ENCODE measurements at regions of chr15 and their contacts with region 1.

Region 1: GRCh38 chr15:76311100-76311953 is at the start of gene ETFA:
- DNase-seq: peak; percentile 97
- H3K4me3 Mint-ChIP-seq: peak within 1 kb of the TSS; percentile 90
- H3K27ac Mint-ChIP-seq: peak within 1 kb of the TSS; percentile 62
- H3K4me1 Mint-ChIP-seq: peaks cover 31% of the 10 kb centered on the region
- H3K27me3 Mint-ChIP-seq: no peaks in the 10 kb centered on the region
- total RNA-seq, gene ETFA: 169 to 173 TPM

Region 2: GRCh38 chr15:75201609-75202250 is 1109.6 kb before region 1 on chr15 and contains the start of gene C15orf39:
- CTCF ChIA-PET with region 1: no interaction called
- POLR2A ChIA-PET with region 1: no interaction called
- intact Hi-C with region 1: no loop called
- DNase-seq: peak; percentile 80
- H3K4me3 Mint-ChIP-seq: peak within 1 kb of the TSS; percentile 89
- H3K27ac Mint-ChIP-seq: peak within 1 kb of the TSS; percentile 84
- H3K4me1 Mint-ChIP-seq: peaks cover 35% of the 10 kb centered on the region
- H3K27me3 Mint-ChIP-seq: no peaks in the 10 kb centered on the region
- total RNA-seq, gene C15orf39: 14.1 to 14.2 TPM

Region 3: DNA sequence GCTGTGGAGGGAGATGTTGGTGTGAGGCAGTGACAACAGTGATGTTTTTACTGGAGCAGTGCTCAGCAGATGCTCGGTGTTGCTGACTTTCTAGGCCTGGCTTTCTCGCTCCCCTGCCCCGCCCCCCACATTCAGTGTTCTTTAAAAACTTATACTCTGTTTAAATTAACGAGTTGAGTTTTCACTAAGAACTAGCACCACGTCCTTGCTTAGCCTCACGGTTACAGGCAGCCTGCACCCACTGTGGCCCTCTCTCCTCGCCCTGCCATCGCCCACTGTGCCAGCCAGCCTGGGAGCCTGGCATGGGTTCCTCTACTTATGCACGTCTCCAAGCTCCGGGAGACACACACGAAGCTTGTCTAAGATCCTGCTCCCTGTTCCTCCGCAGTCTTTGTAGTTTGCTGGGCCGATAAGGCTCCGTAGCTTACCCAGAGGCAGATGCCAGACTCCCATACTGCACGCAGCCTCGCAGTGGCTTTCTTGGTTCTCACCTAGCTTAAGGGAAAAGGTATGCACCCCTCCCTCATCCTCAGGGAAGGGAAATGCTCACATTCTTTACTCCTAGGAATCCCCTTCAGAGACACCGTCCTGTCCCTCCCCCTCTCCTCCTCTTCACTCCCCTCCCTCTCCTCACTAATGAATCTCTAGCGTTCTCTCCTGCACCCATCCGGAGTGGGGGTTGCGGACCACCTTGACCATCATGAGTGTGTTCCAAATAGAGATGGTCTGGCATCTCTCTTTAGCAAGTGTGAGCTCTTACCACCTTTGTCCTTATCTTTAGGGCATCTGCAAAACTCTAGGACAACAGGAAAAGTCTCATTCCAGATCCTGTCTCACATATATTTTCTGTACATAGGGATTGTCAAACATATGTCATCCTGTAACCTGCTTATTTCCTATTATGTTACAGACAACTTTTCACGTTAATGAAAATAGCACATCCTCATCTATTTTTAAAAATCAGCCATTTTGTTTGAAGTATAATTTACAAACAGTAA is 195.1 kb before region 1 on chr15:
- CTCF ChIA-PET with region 1: no interaction called
- POLR2A ChIA-PET with region 1: no interaction called
- intact Hi-C with region 1: no loop called
- DNase-seq: no peak
- H3K4me3 Mint-ChIP-seq: no peak overlapping the region
- H3K27ac Mint-ChIP-seq: no peak overlapping the region
- H3K4me1 Mint-ChIP-seq: no peaks in the 10 kb centered on the region
- H3K27me3 Mint-ChIP-seq: no peaks in the 10 kb centered on the region

Region 4: GRCh38 chr15:76190834-76191538 is 120.3 kb before region 1 on chr15:
- CTCF ChIA-PET with region 1: no interaction called
- POLR2A ChIA-PET with region 1: no interaction called
- intact Hi-C with region 1: loop called (anchors 5 kb)
- DNase-seq: peak; percentile 84
- H3K4me3 Mint-ChIP-seq: no peak overlapping the region
- H3K27ac Mint-ChIP-seq: no peak overlapping the region
- H3K4me1 Mint-ChIP-seq: peaks cover 13% of the 10 kb centered on the region
- H3K27me3 Mint-ChIP-seq: peaks cover 31% of the 10 kb centered on the region

Region 5: GRCh38 chr15:76285239-76285825 is 26.0 kb before region 1 on chr15:
- CTCF ChIA-PET with region 1: no interaction called
- POLR2A ChIA-PET with region 1: interaction called, 10 read pairs
- intact Hi-C with region 1: loop called (anchors 1 kb)
- DNase-seq: no peak
- H3K4me3 Mint-ChIP-seq: no peak overlapping the region
- H3K27ac Mint-ChIP-seq: no peak overlapping the region
- H3K4me1 Mint-ChIP-seq: peaks cover 13% of the 10 kb centered on the region
- H3K27me3 Mint-ChIP-seq: no peaks in the 10 kb centered on the region

Region 6: GRCh38 chr15:76293361-76293760 is 18.0 kb before region 1 on chr15:
- CTCF ChIA-PET with region 1: no interaction called
- POLR2A ChIA-PET with region 1: interaction called, 10 read pairs
- intact Hi-C with region 1: loop called (anchors 1 kb)
- DNase-seq: no peak
- H3K4me3 Mint-ChIP-seq: no peak overlapping the region
- H3K27ac Mint-ChIP-seq: peak overlapping the region; percentile 64
- H3K4me1 Mint-ChIP-seq: peaks cover 22% of the 10 kb centered on the region
- H3K27me3 Mint-ChIP-seq: no peaks in the 10 kb centered on the region

Region 7: DNA sequence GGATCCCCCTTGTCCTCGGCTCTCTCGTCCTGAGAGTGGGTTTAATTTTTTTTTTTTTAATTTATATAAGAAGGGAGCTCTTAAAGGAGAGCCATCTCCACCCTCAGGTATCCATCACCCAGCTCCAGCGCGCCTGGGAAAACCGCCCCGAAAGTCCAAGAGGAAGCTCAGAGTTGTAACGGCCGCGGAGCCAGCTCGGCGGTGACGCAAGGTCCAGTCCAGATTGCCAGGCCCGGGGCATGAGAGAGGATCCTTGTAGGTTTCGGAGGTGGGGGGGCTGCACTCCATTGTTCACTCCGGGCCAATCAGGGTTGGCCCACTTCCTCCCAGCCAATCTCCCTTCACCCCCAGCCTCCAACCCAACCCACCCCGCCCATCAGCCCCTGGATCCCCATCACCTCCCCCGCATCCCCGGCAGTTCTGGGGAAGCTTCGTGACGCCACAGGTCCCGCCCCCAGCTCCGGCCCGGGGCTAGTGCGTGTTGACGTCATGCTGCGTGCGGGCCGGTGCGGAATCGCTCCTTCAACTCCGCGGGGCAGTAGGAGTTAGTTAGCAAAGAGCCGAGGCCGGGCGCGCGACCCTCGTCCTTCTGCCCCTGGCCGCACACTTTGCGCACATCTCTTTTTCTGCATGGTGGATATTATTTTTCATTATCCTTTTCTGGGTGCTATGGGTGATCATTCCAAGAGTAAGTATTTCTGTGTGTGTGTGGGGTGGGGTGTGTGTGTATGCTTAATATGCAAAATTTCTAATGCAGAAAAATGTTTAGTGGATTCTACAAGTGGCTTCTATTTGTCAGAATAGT is 25.1 kb after region 1 on chr15 and contains the start of gene ISL2:
- CTCF ChIA-PET with region 1: no interaction called
- POLR2A ChIA-PET with region 1: interaction called, 5 read pairs
- intact Hi-C with region 1: loop called (anchors 2 kb)
- DNase-seq: peak; percentile 87
- H3K4me3 Mint-ChIP-seq: peak within 1 kb of the TSS; percentile 49
- H3K27ac Mint-ChIP-seq: no peak within 1 kb of the TSS
- H3K4me1 Mint-ChIP-seq: peaks cover 44% of the 10 kb centered on the region
- H3K27me3 Mint-ChIP-seq: peaks cover 65% of the 10 kb centered on the region
- total RNA-seq, gene ISL2: 0.15 to 0.19 TPM